ENCODE measurements at regions of chr16 and their contacts with region 1.

Region 1: GRCh38 chr16:12455287-12455798 is 348.3 kb downstream of the CPPED1 start:
- DNase-seq: peak; percentile 35 to 63 (median 56)
- H3K4me3 ChIP-seq: no peak overlapping the region
- H3K4me3 Mint-ChIP-seq: peak overlapping the region in 1 of 2 donors; percentile 25
- H3K27ac ChIP-seq: no peak overlapping the region
- H3K27ac Mint-ChIP-seq: no peak overlapping the region
- H3K4me1 ChIP-seq: peaks cover 32 to 35% of the 10 kb centered on the region in 2 donors
- H3K4me1 Mint-ChIP-seq: peaks cover 39% of the 10 kb centered on the region
- H3K27me3 ChIP-seq: no peaks in the 10 kb centered on the region
- H3K27me3 Mint-ChIP-seq: no peaks in the 10 kb centered on the region
- CTCF ChIP-seq: peak; percentile 95

Region 2: DNA sequence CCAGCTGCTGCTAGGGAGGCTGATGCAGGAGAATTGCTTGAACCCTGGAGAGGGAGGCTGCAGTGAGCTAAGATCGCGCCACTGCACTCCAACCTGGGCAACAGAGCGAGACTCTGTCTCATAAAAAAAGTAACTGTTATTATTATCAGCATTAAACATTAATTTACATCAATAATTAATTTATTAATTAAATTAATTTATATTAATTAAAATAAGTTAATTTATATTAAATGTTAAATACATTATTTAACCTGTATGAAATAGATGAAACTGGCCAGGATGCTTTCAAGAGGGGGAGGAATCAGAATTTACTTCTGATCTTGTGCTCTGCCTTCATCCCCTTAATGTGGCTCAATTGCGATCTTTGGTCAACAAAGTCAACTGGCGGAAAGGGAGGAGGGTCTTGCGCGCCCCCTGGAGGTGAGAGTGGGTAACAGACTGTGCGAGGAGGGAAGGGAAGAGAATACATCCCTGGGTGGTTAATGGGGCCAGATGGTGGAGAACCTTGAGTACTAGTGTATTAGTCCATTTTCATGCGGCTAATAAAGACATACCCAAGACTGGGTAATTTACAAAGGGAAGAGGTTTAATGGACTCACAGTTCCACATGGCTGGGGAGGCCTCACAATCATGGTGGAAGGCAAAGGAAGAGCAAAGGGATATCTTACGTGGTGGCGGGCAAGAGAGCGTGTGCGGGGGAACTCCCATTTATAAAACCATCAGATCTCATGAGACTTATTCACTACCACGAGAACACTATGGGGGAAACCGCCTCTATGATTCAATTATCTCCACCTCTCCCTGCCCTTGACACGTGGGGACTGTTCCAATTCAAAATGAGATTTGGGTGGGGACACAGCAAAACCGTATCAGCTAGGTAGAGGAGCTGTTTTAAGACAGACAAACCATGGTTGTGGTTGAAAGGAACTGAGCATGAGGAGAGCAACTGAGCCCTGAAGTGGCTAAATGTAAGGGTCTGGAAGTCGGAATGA is 364.1 kb after region 1 on chr16:
- intact Hi-C with region 1: loop called (anchors 2 kb)
- DNase-seq: peak; percentile 65 to 75 (median 67)
- H3K4me3 ChIP-seq: no peak overlapping the region
- H3K4me3 Mint-ChIP-seq: peak overlapping the region in 1 of 2 donors; percentile 19
- H3K27ac ChIP-seq: no peak overlapping the region
- H3K27ac Mint-ChIP-seq: peak overlapping the region in 3 of 7 donors; percentile 2 to 66 (median 66)
- H3K4me1 ChIP-seq: peaks cover 46 to 47% of the 10 kb centered on the region in 2 donors
- H3K4me1 Mint-ChIP-seq: peaks cover 41% of the 10 kb centered on the region
- H3K27me3 ChIP-seq: peaks cover 0 to 4% of the 10 kb centered on the region in 2 donors
- H3K27me3 Mint-ChIP-seq: peaks cover 9 to 21% (median 17%) of the 10 kb centered on the region in 3 donors
- CTCF ChIP-seq: peak; percentile 91

Region 3: GRCh38 chr16:13453938-13454553 is 998.7 kb after region 1 on chr16:
- intact Hi-C with region 1: loop called (anchors 5 to 10 kb)
- DNase-seq: peak in 1 of 3 donors; percentile 4
- H3K4me3 ChIP-seq: no peak overlapping the region
- H3K4me3 Mint-ChIP-seq: no peak overlapping the region
- H3K27ac ChIP-seq: no peak overlapping the region
- H3K27ac Mint-ChIP-seq: no peak overlapping the region
- H3K4me1 ChIP-seq: no peaks in the 10 kb centered on the region
- H3K4me1 Mint-ChIP-seq: no peaks in the 10 kb centered on the region
- H3K27me3 ChIP-seq: no peaks in the 10 kb centered on the region
- H3K27me3 Mint-ChIP-seq: peaks cover 0 to 4% (median 3%) of the 10 kb centered on the region in 3 donors
- CTCF ChIP-seq: peak; percentile 77

Measured in CD14-positive monocyte (primary cell).